ENCODE measurements at regions of chr14 and their contacts with region 1.

Region 1: DNA sequence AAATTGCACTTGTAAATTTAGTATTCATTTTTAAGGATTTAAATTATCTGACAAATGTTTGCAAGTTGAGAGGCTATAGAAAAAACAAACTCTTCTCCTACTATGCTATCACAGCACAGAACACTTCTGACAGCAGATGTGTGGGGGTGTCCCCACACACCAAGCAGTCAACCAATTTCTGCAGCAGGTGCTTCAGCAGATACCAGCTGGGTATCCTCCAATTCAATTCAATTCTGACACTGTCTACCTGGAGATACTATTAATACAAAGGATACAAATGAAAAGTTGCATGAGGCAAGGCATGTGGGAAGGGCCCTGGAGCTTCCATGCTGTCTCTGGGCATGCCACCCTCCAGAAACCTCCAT is 35.1 kb downstream of the PCNX1 start:
- DNase-seq: no peak
- H3K4me3 ChIP-seq: no peak overlapping the region
- H3K4me3 Mint-ChIP-seq: peak overlapping the region in 7 of 8 donors; percentile 1 to 93 (median 65)
- H3K27ac ChIP-seq: no peak overlapping the region
- H3K27ac Mint-ChIP-seq: peak overlapping the region; percentile 80 to 98 (median 89)
- H3K4me1 ChIP-seq: peaks cover 42% of the 10 kb centered on the region
- H3K4me1 Mint-ChIP-seq: peaks cover 55 to 94% (median 73%) of the 10 kb centered on the region in 4 donors
- H3K27me3 ChIP-seq: no peaks in the 10 kb centered on the region
- H3K27me3 Mint-ChIP-seq: no peaks in the 10 kb centered on the region

Region 2: GRCh38 chr14:70873627-70874026 is 68.7 kb before region 1 on chr14:
- CTCF ChIA-PET with region 1: interaction called, 7 read pairs
- POLR2A ChIA-PET with region 1: interaction called, 6 read pairs
- intact Hi-C with region 1: loop called (anchors 1 kb)
- DNase-seq: peak; percentile 31 to 43 (median 35)
- H3K4me3 ChIP-seq: no peak overlapping the region
- H3K4me3 Mint-ChIP-seq: peak overlapping the region in 5 of 8 donors; percentile 42 to 69 (median 61)
- H3K27ac ChIP-seq: no peak overlapping the region
- H3K27ac Mint-ChIP-seq: peak overlapping the region; percentile 68 to 90 (median 86)
- H3K4me1 ChIP-seq: peaks cover 23% of the 10 kb centered on the region
- H3K4me1 Mint-ChIP-seq: peaks cover 10 to 26% (median 21%) of the 10 kb centered on the region in 4 donors
- H3K27me3 ChIP-seq: no peaks in the 10 kb centered on the region
- H3K27me3 Mint-ChIP-seq: no peaks in the 10 kb centered on the region

Region 3: DNA sequence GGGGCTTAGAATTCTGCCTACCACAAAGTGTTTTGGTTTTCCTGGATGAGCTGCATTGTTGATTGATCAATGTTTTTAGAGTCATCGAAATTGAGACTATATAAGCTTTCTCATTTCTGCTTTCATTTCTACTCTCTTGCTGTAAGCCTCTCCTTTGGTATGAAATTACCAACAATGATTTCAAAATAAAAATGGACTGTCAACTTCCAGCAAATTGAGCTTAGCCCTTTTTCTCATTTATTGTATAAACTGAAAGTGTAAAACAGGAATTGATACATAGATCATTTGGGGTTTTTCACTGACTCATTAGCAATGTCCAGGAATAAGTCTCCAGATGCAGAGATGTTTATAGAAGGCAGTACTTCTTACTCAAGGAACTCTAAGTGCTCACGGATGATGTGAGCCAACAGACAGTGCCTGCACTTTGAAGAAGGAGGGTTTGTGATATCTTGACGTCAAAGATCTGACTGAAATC is 55.1 kb before region 1 on chr14:
- CTCF ChIA-PET with region 1: no interaction called
- POLR2A ChIA-PET with region 1: interaction called, 12 read pairs
- intact Hi-C with region 1: no loop called
- DNase-seq: peak in 3 of 5 donors; percentile 27 to 51 (median 30)
- H3K4me3 ChIP-seq: peak overlapping the region; percentile 11 to 42
- H3K4me3 Mint-ChIP-seq: peak overlapping the region; percentile 69 to 90 (median 76)
- H3K27ac ChIP-seq: peak overlapping the region; percentile 55
- H3K27ac Mint-ChIP-seq: peak overlapping the region; percentile 87 to 97 (median 91)
- H3K4me1 ChIP-seq: peaks cover 96% of the 10 kb centered on the region
- H3K4me1 Mint-ChIP-seq: peaks cover 66 to 99% (median 86%) of the 10 kb centered on the region in 4 donors
- H3K27me3 ChIP-seq: no peaks in the 10 kb centered on the region
- H3K27me3 Mint-ChIP-seq: no peaks in the 10 kb centered on the region

Region 4: GRCh38 chr14:70919774-70920173 is 22.6 kb before region 1 on chr14:
- CTCF ChIA-PET with region 1: interaction called, 5 read pairs
- POLR2A ChIA-PET with region 1: interaction called, 40 read pairs
- intact Hi-C with region 1: no loop called
- DNase-seq: peak in 1 of 5 donors; percentile 64
- H3K4me3 ChIP-seq: no peak overlapping the region
- H3K4me3 Mint-ChIP-seq: peak overlapping the region; percentile 38 to 75 (median 62)
- H3K27ac ChIP-seq: peak overlapping the region; percentile 35
- H3K27ac Mint-ChIP-seq: peak overlapping the region; percentile 54 to 91 (median 78)
- H3K4me1 ChIP-seq: peaks cover 97% of the 10 kb centered on the region
- H3K4me1 Mint-ChIP-seq: peaks cover 67 to 98% (median 84%) of the 10 kb centered on the region in 4 donors
- H3K27me3 ChIP-seq: no peaks in the 10 kb centered on the region
- H3K27me3 Mint-ChIP-seq: no peaks in the 10 kb centered on the region

Region 5: DNA sequence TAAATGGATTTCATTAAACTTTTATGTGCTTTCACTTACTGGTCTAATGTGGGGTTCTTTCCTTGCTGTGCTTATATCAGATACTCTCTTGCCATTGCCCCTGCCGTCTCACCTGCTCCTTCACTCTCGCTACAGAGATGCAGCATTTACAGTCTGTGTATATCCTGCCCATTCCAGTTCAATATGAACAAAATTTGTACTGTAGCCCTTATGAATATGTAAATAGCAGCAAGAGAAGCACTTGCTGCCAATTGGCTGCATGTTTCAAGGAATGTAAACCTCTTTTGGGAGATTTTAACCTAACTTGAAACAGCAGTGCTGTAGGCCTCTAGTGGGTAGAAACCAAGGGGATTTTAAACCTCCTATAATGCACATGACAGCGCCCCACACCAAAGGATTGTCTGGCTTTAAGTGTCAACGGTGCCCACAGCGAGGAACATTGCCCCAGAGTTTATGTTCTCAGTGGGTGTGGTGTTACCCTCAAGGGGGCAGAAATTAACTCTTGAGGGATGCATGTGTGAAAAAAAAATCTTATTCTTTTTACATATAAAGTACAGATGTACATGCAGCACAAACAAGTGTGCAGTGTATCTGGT is 16.0 kb before region 1 on chr14:
- CTCF ChIA-PET with region 1: interaction called, 21 read pairs
- POLR2A ChIA-PET with region 1: interaction called, 40 read pairs
- intact Hi-C with region 1: no loop called
- DNase-seq: no peak
- H3K4me3 ChIP-seq: no peak overlapping the region
- H3K4me3 Mint-ChIP-seq: peak overlapping the region in 4 of 8 donors; percentile 13 to 80 (median 60)
- H3K27ac ChIP-seq: no peak overlapping the region
- H3K27ac Mint-ChIP-seq: peak overlapping the region; percentile 6 to 91 (median 39)
- H3K4me1 ChIP-seq: peaks cover 86% of the 10 kb centered on the region
- H3K4me1 Mint-ChIP-seq: peaks cover 53 to 92% (median 75%) of the 10 kb centered on the region in 4 donors
- H3K27me3 ChIP-seq: no peaks in the 10 kb centered on the region
- H3K27me3 Mint-ChIP-seq: no peaks in the 10 kb centered on the region

Region 6: GRCh38 chr14:71029236-71029781 is 87.0 kb after region 1 on chr14:
- CTCF ChIA-PET with region 1: no interaction called
- POLR2A ChIA-PET with region 1: no interaction called
- intact Hi-C with region 1: no loop called
- DNase-seq: no peak
- H3K4me3 ChIP-seq: no peak overlapping the region
- H3K4me3 Mint-ChIP-seq: no peak overlapping the region
- H3K27ac ChIP-seq: no peak overlapping the region
- H3K27ac Mint-ChIP-seq: peak overlapping the region in 5 of 7 donors; percentile 25 to 78 (median 38)
- H3K4me1 ChIP-seq: no peaks in the 10 kb centered on the region
- H3K4me1 Mint-ChIP-seq: peaks cover 7 to 9% (median 8%) of the 10 kb centered on the region in 4 donors
- H3K27me3 ChIP-seq: no peaks in the 10 kb centered on the region
- H3K27me3 Mint-ChIP-seq: no peaks in the 10 kb centered on the region

Region 7: DNA sequence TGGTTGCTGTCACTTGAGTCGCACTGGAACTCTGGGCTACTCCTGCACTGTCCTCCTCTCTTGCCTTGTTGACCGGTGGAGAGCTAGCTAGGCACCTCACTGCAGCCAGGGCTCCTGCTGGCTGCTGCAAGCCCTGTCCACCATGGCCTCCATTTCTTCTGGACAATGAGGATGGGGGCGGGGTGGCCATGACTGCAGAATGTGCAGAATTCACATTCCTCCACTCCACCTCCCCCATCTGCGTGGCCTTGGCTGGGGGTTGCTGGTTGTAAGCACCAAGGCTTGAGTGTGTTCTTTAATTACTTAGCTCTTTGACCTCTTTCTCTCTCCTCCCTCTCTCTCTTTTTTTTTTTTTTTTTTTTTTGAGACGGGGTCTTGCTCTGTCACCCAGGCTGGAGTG is 213.4 kb after region 1 on chr14:
- CTCF ChIA-PET with region 1: no interaction called
- POLR2A ChIA-PET with region 1: no interaction called
- intact Hi-C with region 1: no loop called
- DNase-seq: no peak
- H3K4me3 ChIP-seq: no peak overlapping the region
- H3K4me3 Mint-ChIP-seq: no peak overlapping the region
- H3K27ac ChIP-seq: no peak overlapping the region
- H3K27ac Mint-ChIP-seq: no peak overlapping the region
- H3K4me1 ChIP-seq: no peaks in the 10 kb centered on the region
- H3K4me1 Mint-ChIP-seq: no peaks in the 10 kb centered on the region
- H3K27me3 ChIP-seq: no peaks in the 10 kb centered on the region
- H3K27me3 Mint-ChIP-seq: no peaks in the 10 kb centered on the region

Region 8: DNA sequence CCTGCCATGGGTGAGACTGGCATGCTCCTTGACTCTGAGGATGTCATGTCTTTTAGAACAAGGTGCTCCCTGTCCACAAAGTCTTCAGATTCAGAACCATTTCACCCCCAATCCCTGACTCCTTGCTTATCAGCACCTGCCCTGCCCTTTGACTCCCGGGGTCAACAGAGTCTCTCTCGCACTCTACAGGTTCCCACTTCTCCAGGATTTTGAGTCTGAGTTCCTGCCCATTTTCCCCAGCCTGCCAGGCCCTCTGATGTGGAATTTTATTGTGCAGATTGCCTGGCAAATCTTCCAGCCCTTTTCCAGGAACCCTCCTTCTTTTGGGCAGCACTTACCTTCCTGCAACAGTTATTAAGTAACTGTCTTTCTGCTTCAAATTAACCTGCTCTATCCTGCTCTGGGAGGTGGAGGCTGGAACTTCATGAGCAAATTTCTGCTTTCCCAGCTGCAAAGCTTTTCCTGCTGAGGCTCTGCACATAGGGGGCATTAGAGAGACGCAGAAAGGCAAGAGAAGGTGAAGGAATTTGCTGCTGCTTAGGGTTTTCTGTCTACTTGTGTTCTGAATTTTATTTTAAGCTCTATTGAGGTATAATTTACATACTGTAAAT is 224.0 kb after region 1 on chr14:
- CTCF ChIA-PET with region 1: no interaction called
- POLR2A ChIA-PET with region 1: no interaction called
- intact Hi-C with region 1: no loop called
- DNase-seq: no peak
- H3K4me3 ChIP-seq: no peak overlapping the region
- H3K4me3 Mint-ChIP-seq: no peak overlapping the region
- H3K27ac ChIP-seq: no peak overlapping the region
- H3K27ac Mint-ChIP-seq: peak overlapping the region in 1 of 7 donors; percentile 38
- H3K4me1 ChIP-seq: no peaks in the 10 kb centered on the region
- H3K4me1 Mint-ChIP-seq: peaks cover 12 to 14% (median 12%) of the 10 kb centered on the region in 4 donors
- H3K27me3 ChIP-seq: no peaks in the 10 kb centered on the region
- H3K27me3 Mint-ChIP-seq: peaks cover 2% of the 10 kb centered on the region in 2 donors

Region 9: DNA sequence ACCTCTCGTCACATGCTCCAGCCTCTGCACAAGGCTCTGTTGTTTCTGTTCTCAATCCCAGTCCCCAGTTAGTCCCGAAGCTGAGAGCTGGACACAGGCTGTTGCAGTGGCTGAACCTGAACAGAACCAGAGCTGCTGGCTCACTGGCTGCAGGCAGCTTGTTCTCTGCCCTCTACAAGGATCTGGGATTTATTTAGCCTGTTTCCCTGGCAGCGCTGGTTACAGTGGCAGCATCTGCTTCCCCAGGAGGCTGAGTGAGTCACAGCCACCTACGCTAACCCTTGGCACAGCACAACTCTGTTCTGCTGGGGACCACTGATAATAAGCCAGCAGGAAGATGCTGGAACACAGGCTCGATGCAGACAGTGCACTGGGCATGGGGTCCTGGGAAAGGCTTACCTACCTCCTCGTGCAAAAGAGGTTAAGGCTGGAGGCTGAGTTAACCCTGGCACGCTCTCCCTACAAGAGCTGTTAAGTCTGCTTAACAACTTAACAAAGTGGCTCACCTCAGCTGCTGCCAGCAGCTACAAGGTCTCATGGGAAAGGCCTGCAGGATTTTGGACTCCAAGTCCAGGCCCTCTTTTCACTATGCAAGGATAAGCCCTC is 264.5 kb after region 1 on chr14:
- CTCF ChIA-PET with region 1: no interaction called
- POLR2A ChIA-PET with region 1: no interaction called
- intact Hi-C with region 1: no loop called
- DNase-seq: no peak
- H3K4me3 ChIP-seq: no peak overlapping the region
- H3K4me3 Mint-ChIP-seq: no peak overlapping the region
- H3K27ac ChIP-seq: no peak overlapping the region
- H3K27ac Mint-ChIP-seq: no peak overlapping the region
- H3K4me1 ChIP-seq: no peaks in the 10 kb centered on the region
- H3K4me1 Mint-ChIP-seq: no peaks in the 10 kb centered on the region
- H3K27me3 ChIP-seq: no peaks in the 10 kb centered on the region
- H3K27me3 Mint-ChIP-seq: peaks cover 0 to 5% of the 10 kb centered on the region in 2 donors

Measured in CD4-positive, alpha-beta memory T cell (primary cell).